Activated CD4-positive, alpha-beta memory T cell treated with anti-CD3 and anti-CD28 coated beads, Interleukin-2, amount 10 ng/mL, durations not matched to agents 7 days and 5 days (primary cell): ENCODE measurements at regions of chr1 and their contacts with region 1.

Region 1: DNA sequence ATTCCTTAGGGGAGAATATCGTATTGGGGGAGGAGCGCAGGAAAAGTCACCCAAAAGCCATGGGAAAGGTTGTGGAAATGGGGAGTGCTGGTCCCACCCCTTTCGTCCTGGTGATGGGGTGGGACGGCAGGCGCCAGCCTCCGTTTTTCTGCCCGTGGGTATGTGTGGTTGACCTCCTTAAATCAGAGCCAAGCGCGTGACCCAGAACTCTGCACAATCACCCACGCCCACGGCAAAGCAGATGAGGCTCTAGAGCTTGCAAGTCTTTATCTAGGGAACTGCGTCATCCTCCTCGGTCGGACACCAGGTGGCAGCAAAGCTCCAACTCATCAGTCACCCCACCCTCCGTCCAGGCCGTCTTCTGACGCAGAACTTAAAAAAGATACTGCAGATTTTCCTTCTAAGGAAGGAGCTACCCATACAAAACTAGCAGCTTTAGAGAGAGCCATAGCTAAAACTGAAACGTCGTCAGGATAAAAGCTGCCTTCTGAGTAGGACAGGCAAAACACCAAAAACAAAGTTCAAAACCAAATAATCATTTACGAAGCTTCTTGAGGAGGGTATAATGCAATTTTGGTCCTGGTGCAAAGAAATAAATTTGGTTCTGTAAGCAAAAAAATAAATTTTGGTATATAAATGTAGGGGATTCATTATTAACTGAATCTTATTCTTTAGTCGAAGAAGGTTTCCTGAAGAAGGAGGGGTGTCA is 62.0 kb downstream of the TBX19 start:
- DNase-seq: peak; percentile 92
- H3K4me3 Mint-ChIP-seq: no peak overlapping the region
- H3K27ac Mint-ChIP-seq: peak overlapping the region; percentile 75
- H3K4me1 Mint-ChIP-seq: peaks cover 82% of the 10 kb centered on the region
- H3K27me3 Mint-ChIP-seq: peaks cover 3% of the 10 kb centered on the region

Region 2: GRCh38 chr1:168225476-168226190 is 117.1 kb before region 1 on chr1 and contains the start of gene SFT2D2:
- CTCF ChIA-PET with region 1: interaction called, 19 read pairs
- POLR2A ChIA-PET with region 1: interaction called, 9 read pairs
- DNase-seq: peak; percentile 84
- H3K4me3 Mint-ChIP-seq: peak within 1 kb of the TSS; percentile 95
- H3K27ac Mint-ChIP-seq: peak within 1 kb of the TSS; percentile 84
- H3K4me1 Mint-ChIP-seq: peaks cover 53% of the 10 kb centered on the region
- H3K27me3 Mint-ChIP-seq: peaks cover 8% of the 10 kb centered on the region
- total RNA-seq, gene SFT2D2: 65.6 to 72.1 TPM

Region 3: DNA sequence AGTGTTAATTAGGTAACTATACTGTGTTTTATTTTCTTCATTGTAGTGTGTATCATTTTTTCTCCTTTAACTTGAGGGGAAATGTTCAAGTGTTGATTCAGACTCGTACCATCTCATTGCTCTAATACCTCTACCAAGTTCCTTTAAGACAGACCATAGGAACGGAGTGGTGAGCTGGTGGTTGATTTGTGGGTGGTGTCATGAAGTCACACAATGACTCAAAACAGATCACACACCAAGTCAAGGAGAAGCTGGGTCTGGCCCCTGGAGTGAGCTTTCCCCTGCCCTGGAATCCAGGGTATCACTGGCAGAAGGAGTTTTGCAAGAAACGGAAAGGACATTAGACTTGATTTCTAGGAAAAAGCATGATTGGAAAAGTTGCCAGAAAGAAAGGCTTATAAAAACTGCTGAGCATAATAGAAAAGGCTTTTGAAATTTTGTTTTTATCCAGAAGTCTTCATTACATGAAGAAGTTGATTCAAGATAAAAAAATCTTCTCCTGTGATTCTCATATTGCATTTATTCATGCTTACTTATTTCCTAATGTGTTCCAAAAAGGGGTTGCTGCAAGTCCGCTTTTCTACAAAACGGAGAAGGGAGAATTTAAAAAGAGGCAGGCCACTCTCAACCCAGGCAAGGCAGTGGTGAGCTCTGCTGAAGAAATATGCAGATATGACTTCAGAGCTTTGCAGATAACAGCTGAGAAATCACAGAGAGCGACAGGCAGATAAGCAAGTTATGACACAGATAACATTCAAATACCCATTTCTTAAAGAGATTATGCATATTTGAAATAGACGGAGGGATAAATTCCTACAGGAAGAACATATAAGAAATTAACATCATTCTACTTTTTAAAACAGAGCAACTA is 17.7 kb after region 1 on chr1:
- CTCF ChIA-PET with region 1: interaction called, 263 read pairs
- POLR2A ChIA-PET with region 1: interaction called, 64 read pairs
- DNase-seq: peak; percentile 81
- H3K4me3 Mint-ChIP-seq: no peak overlapping the region
- H3K27ac Mint-ChIP-seq: peak overlapping the region; percentile 72
- H3K4me1 Mint-ChIP-seq: peaks cover 59% of the 10 kb centered on the region
- H3K27me3 Mint-ChIP-seq: no peaks in the 10 kb centered on the region

Region 4: GRCh38 chr1:168386949-168387586 is 44.3 kb after region 1 on chr1:
- CTCF ChIA-PET with region 1: interaction called, 12 read pairs
- POLR2A ChIA-PET with region 1: interaction called, 3 read pairs
- DNase-seq: peak; percentile 79
- H3K4me3 Mint-ChIP-seq: peak overlapping the region; percentile 36
- H3K27ac Mint-ChIP-seq: peak overlapping the region; percentile 14
- H3K4me1 Mint-ChIP-seq: peaks cover 19% of the 10 kb centered on the region
- H3K27me3 Mint-ChIP-seq: peaks cover 12% of the 10 kb centered on the region

Region 5: DNA sequence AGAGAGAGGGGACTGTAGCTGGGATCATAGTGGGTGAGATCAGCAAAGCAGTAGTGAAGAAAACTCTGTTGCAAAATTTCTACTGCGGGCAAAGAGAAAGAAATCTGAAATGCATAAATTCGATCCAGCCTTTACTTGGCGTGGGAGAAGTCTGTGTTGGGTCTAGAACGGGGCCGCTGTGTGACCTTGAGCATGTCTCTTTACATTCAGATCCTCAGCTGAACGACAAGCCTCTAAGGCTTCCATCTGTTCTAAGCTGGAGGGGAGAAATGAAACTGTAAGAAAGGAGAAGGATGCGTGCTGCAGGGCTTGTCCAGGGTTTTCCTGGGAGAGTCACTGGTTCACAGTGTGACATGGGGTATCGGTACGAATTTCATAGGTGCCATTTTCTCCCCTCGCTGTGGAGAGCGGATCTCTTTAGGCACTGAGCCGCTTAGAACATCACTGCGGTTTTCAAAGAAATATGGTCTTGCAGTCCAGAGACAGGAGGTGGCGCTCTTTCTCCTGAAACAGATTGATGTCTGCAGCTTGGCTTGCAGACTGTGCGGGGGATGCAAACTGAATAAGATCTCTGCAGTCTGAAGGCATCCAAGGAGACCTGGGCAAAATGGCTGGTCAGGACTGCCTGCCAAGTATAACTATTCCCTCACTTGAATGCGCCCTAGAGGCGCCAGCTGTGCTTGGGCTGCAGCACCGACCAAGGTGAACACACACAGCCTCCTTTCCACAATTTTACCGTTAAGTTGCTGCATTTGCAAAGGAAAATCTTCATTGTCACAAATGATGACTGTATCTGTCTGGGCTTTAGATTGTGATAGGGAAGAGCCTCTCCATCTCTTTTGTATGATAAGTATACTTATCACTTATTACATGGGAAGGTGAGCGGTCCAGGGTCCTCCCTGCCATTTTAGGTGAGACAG is 97.0 kb after region 1 on chr1:
- CTCF ChIA-PET with region 1: interaction called, 272 read pairs
- POLR2A ChIA-PET with region 1: interaction called, 25 read pairs
- DNase-seq: peak; percentile 88
- H3K4me3 Mint-ChIP-seq: peak overlapping the region; percentile 64
- H3K27ac Mint-ChIP-seq: peak overlapping the region; percentile 63
- H3K4me1 Mint-ChIP-seq: peaks cover 50% of the 10 kb centered on the region
- H3K27me3 Mint-ChIP-seq: peaks cover 2% of the 10 kb centered on the region

Region 6: GRCh38 chr1:168535536-168535935 is 192.8 kb after region 1 on chr1:
- CTCF ChIA-PET with region 1: interaction called, 15 read pairs
- POLR2A ChIA-PET with region 1: interaction called, 5 read pairs
- DNase-seq: peak; percentile 37
- H3K4me3 Mint-ChIP-seq: peak overlapping the region; percentile 54
- H3K27ac Mint-ChIP-seq: peak overlapping the region; percentile 83
- H3K4me1 Mint-ChIP-seq: peaks cover 48% of the 10 kb centered on the region
- H3K27me3 Mint-ChIP-seq: peaks cover 4% of the 10 kb centered on the region

Region 7: GRCh38 chr1:169348383-169349036 is 1005.8 kb after region 1 on chr1:
- CTCF ChIA-PET with region 1: interaction called, 27 read pairs
- POLR2A ChIA-PET with region 1: no interaction called
- DNase-seq: no peak
- H3K4me3 Mint-ChIP-seq: no peak overlapping the region
- H3K27ac Mint-ChIP-seq: no peak overlapping the region
- H3K4me1 Mint-ChIP-seq: peaks cover 16% of the 10 kb centered on the region
- H3K27me3 Mint-ChIP-seq: peaks cover 2% of the 10 kb centered on the region